Endothelial cell of umbilical vein (primary cell): ENCODE measurements at regions of chr1 and their contacts with region 1.

Region 1: DNA sequence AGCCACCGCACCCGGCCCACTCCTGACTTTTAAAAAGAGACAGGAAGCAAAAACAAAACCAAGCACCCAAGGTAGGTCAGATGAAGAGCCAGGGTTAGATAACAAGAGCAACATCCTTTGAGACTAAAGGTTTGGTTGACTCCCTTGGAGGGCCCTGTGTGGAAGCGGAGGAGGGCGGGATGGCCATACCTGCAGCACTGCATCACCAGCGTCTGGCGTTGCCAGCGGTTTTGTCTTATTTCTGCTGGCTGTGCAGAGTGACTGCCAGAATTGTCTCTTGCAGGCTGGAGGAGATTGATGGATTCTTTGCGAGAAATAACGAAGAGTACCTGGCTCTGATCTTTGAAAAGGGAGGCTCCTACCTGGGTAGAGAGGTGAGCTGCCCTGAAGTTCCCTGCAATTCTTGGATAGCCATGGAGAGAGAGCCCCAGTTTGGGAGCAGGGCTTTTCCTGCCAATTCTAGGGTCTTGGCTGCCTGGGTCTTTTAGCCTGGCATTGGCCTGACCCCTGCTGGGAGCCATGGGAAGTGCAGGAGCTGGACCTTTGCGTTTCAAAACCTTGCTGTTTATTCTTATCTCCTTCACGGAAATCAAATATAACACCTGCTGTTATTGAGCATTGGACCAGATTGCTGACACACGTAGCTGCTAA is 24.0 kb downstream of the QSOX1 start:
- DNase-seq: peak; percentile 64
- H3K4me3 ChIP-seq: no peak overlapping the region
- H3K27ac ChIP-seq: no peak overlapping the region
- H3K4me1 ChIP-seq: no peaks in the 10 kb centered on the region
- H3K27me3 ChIP-seq: no peaks in the 10 kb centered on the region
- CTCF ChIP-seq: peak; percentile 91 to 93
- POLR2A ChIP-seq: no peak

Region 2: DNA sequence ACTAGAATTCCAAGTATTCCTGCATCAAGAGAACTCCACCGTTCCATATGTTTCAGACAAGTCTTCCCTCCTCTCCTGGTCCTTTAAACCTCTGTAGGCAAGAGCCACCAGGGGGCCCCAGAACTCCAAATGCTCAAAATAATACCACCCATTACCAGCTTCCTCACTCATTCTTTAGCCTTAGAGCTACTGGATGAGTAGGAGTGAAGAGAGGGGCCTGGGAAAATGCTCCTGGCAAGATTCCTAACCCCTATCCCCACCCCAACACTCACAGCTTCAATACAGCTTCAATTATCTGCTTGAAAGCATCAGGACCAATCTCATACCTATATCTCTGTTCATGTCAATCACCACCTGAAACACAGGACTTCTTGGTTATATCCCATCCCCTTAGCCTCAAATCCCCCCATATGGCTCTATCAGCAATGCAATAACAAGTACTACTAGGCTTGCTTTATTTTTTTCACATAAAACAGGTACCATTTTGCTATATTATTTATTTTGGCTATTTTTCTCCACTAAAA is 310.8 kb before region 1 on chr1:
- CTCF ChIA-PET with region 1: interaction called, 177 read pairs
- POLR2A ChIA-PET with region 1: no interaction called
- dilution Hi-C with region 1: no loop called
- intact Hi-C with region 1: loop called (anchors 1 kb)
- DNase-seq: peak; percentile 68
- H3K4me3 ChIP-seq: no peak overlapping the region
- H3K27ac ChIP-seq: no peak overlapping the region
- H3K4me1 ChIP-seq: no peaks in the 10 kb centered on the region
- H3K27me3 ChIP-seq: no peaks in the 10 kb centered on the region
- CTCF ChIP-seq: peak; percentile 79 to 80
- POLR2A ChIP-seq: no peak

Region 3: GRCh38 chr1:180092931-180093559 is 85.6 kb before region 1 on chr1:
- CTCF ChIA-PET with region 1: interaction called, 15 read pairs
- POLR2A ChIA-PET with region 1: no interaction called
- dilution Hi-C with region 1: no loop called
- intact Hi-C with region 1: no loop called
- DNase-seq: no peak
- H3K4me3 ChIP-seq: no peak overlapping the region
- H3K27ac ChIP-seq: no peak overlapping the region
- H3K4me1 ChIP-seq: peaks cover 7% of the 10 kb centered on the region
- H3K27me3 ChIP-seq: no peaks in the 10 kb centered on the region
- CTCF ChIP-seq: no peak
- POLR2A ChIP-seq: no peak

Region 4: GRCh38 chr1:180586671-180587155 is 408.1 kb after region 1 on chr1:
- CTCF ChIA-PET with region 1: no interaction called
- POLR2A ChIA-PET with region 1: no interaction called
- dilution Hi-C with region 1: no loop called
- intact Hi-C with region 1: no loop called
- DNase-seq: peak; percentile 47
- H3K4me3 ChIP-seq: no peak overlapping the region
- H3K27ac ChIP-seq: no peak overlapping the region
- H3K4me1 ChIP-seq: no peaks in the 10 kb centered on the region
- H3K27me3 ChIP-seq: peaks cover 0 to 4% of the 10 kb centered on the region in 2 experiments
- CTCF ChIP-seq: no peak
- POLR2A ChIP-seq: no peak